ENCODE measurements at regions of chr2 and their contacts with region 1.

Region 1: GRCh38 chr2:48205137-48205798 is 299.0 kb upstream of the FBXO11 start:
- DNase-seq: no peak
- H3K4me3 ChIP-seq: no peak overlapping the region
- H3K27ac ChIP-seq: no peak overlapping the region
- H3K4me1 ChIP-seq: peaks cover 8% of the 10 kb centered on the region
- H3K27me3 ChIP-seq: no peaks in the 10 kb centered on the region
- CTCF ChIP-seq: peak in 1 of 2 donors; percentile 17

Region 2: DNA sequence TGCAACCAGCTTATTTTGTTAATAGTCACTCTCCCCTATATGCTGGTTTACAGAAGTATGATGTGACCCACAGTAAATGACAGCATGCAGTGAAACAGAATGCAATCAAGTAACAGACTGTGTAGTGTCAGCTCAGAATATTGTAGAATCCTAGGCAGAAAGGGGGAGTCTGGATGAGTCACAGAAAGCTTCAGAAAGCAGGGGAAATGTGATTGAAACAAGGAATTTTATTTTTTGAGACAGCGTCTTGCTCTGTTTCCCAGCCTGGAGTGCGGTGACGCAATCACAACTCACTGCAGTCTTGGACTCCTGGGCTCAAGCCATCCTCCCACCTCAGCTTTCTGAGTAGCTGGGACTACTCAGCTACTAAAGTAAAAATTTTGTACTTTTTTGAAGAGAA is 79.1 kb before region 1 on chr2:
- CTCF ChIA-PET with region 1: no interaction called
- dilution Hi-C with region 1: loop called (anchors 5 kb)
- in situ Hi-C with region 1: no loop called
- intact Hi-C with region 1: no loop called
- DNase-seq: no peak
- H3K4me3 ChIP-seq: no peak overlapping the region
- H3K27ac ChIP-seq: no peak overlapping the region
- H3K4me1 ChIP-seq: no peaks in the 10 kb centered on the region
- H3K27me3 ChIP-seq: no peaks in the 10 kb centered on the region
- CTCF ChIP-seq: no peak

Region 3: DNA sequence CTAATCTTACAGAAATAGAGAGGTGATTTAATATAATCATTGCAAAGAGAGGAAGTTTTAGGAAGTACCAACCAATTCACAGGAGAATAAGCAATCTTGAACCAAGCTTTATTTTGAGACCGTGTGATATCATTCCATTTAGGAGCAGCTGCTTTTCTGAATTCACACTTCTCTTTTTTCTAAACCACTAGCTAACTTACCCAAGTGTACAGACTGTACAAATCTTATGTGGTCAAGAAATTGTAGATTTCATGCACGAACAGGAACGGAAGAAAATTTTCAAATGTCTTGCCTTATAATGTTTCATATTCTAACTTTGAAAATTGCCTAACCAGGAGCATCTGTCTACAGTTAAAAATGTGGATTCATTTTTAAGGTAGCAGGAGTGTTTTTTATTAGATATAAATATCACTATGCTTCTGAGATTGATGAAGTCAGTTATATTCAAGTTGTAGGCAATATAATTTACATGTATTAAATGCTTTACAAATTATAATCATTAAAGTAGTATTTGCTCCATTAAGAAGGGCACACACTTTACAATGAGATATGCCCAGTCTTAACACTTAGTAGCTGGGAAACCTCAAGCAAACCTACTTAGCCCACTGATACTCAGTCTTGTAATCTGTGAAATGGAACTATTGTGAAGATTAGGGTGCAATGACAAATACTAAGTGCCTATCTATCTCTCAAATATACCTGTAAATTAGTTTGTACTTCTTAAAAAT is 22.5 kb after region 1 on chr2:
- CTCF ChIA-PET with region 1: no interaction called
- dilution Hi-C with region 1: no loop called
- in situ Hi-C with region 1: no loop called
- intact Hi-C with region 1: no loop called
- DNase-seq: no peak
- H3K4me3 ChIP-seq: no peak overlapping the region
- H3K27ac ChIP-seq: no peak overlapping the region
- H3K4me1 ChIP-seq: peaks cover 7% of the 10 kb centered on the region
- H3K27me3 ChIP-seq: no peaks in the 10 kb centered on the region
- CTCF ChIP-seq: no peak

Region 4: DNA sequence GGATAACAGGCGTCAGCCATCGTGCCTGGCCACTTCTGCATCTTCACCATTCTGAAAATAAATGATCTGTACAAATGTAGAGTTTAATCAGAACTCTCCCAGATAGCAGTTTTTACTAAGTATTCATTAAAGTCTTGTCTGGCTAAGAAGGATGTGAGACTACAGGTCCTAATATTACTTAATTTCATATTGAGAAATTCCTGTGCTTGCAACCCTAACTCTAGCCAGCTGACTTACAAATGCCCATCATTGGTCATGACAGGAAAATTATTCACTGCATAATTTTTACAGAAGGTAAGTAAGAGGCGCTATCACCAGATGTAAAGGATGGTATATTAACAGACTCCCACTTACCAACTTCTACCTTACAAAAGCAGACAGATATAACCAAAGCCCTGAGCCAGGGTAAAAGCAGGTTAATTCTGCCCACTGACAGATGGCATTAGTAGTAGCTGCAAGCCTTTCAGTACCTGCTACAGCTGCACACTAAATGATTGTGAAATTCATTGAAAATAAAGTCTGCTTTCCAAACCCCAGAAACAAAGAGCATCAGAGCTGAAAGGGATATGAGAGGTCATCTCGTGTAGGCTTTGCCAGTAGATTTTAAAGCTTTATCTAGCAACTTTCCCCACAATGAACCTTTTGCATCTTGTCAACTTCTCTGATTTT is 53.3 kb after region 1 on chr2:
- CTCF ChIA-PET with region 1: no interaction called
- dilution Hi-C with region 1: loop called (anchors 5 kb)
- in situ Hi-C with region 1: no loop called
- intact Hi-C with region 1: no loop called
- DNase-seq: no peak
- H3K4me3 ChIP-seq: no peak overlapping the region
- H3K27ac ChIP-seq: no peak overlapping the region
- H3K4me1 ChIP-seq: no peaks in the 10 kb centered on the region
- H3K27me3 ChIP-seq: no peaks in the 10 kb centered on the region
- CTCF ChIP-seq: no peak